Psoas muscle (tissue), 8 donors: ENCODE measurements at regions of chr9 and their contacts with region 1.

Region 1: DNA sequence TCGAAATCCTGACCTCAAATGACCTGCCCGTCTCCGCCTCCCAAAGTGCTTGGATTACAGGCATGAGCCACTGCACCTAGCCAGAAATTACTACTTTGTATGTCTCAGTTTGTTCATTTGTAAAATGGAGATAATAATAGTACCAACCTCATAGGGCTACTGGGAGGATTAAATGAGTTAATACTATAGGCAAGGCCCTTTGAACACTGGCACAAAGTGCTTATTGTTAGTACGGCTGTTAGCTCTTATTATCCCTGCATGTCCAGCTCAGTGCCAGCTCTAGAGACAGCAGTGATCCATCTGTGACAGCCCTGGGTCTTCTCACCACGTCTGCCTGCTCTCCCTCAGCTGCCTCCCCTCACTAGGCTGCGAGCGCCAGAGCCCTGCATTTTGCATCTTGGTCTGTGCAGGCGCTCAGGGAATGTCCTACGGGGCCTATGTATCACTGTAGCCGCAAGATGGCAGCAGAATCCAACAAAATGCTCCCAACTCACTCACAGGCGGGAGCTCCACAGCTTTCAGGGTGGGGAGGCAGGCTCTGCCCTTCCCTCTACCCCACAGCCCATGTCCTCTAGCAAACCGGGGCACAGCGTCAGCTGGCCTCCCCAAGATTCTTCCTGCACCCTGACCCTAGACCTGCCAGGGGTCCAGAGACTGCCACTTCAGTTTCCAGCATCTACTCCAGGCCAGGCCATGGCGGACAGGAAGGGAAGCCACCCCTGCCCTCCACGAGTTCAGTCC is 17.7 kb upstream of the AKNA start:
- DNase-seq: peak; percentile 70 to 80
- ATAC-seq: peak; percentile 91 to 99 (median 92)
- H3K4me3 ChIP-seq: no peak overlapping the region
- H3K27ac ChIP-seq: no peak overlapping the region
- H3K4me1 ChIP-seq: no peaks in the 10 kb centered on the region
- H3K27me3 ChIP-seq: no peaks in the 10 kb centered on the region
- CTCF ChIP-seq: peak; percentile 77

Region 2: GRCh38 chr9:114487607-114488300 is 82.3 kb after region 1 on chr9:
- intact Hi-C with region 1: no loop called
- DNase-seq: no peak
- ATAC-seq: peak; percentile 69 to 83 (median 80)
- H3K4me3 ChIP-seq: no peak overlapping the region
- H3K27ac ChIP-seq: no peak overlapping the region
- H3K4me1 ChIP-seq: no peaks in the 10 kb centered on the region
- H3K27me3 ChIP-seq: no peaks in the 10 kb centered on the region
- CTCF ChIP-seq: peak; percentile 62

Region 3: DNA sequence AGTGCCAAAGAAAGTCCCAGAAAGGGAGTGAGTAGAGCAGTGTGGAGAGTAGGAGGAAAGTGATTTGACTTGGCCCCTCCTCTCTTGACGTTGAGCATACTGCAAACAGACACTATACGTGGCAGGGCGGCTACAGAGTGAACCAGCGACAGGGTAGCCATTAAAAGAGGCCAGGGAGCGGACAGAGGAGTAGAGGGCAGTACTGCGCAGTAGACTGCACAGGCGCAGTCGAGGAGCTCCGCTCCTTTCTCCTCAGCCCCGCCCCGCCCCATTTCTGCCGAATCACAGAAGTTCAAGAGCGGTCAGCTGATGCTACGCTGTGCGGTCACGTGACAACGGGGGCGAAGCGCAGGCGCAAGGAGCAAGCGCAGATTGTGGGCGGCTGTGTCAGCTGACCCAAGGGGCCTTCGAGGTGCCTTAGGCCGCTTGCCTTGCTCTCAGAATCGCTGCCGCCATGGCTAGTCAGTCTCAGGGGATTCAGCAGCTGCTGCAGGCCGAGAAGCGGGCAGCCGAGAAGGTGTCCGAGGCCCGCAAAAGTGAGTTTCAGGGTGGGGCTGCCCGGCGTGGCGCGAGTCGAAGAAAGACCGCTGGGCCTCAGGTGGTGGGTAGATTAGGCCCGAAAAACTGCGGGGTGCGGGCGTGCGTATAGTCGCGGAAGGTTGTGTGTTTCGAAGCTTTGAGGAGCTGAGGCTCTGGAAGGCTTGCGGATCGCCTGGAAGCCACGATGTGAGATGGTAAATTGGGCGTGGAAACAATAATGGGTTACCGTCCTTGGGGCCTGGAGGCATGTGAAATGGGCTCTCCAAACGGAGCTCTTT is 182.1 kb after region 1 on chr9 and contains the start of gene ATP6V1G1:
- intact Hi-C with region 1: loop called in 1 of 2 experiments (anchors 10 kb)
- DNase-seq: peak; percentile 100
- ATAC-seq: peak; percentile 92 to 98 (median 96)
- H3K4me3 ChIP-seq: peak within 1 kb of the TSS; percentile 91
- H3K27ac ChIP-seq: peak within 1 kb of the TSS; percentile 90
- H3K4me1 ChIP-seq: peaks cover 35% of the 10 kb centered on the region
- H3K27me3 ChIP-seq: no peaks in the 10 kb centered on the region
- CTCF ChIP-seq: no peak
- total RNA-seq, gene ATP6V1G1: 60.9 to 98.8 (median 81.8) TPM

Region 4: DNA sequence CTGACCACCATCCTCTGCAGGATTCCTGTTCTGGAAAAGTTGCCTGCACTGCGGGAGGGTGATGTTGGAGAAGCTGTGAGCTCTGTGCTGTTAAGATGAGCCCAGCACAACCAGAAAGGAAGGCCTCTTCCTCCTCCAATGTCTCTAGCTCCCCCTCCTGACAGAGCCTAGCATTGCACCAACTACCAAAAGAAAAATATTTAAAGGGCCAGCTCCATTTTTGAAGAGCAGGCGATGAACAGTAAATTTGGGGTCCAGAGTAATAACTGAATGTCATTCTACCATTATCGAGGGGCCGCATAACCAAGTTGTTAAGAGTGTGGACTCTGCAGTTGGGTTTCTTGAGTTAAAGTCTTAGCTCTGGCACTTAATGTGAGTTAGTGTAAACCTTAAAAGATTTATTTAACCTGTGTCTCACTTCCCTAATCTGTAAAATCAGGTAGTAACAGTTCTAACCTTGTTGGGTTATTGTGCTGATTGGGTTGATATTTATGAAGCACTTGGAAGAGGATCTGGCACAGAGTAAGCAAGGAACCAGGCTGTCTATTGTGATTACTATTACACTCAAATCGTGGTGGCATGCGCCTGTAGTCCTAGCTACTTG is 248.2 kb after region 1 on chr9:
- intact Hi-C with region 1: loop called (anchors 2 to 5 kb)
- DNase-seq: peak in 1 of 2 donors; percentile 54
- ATAC-seq: peak; percentile 67 to 87 (median 80)
- H3K4me3 ChIP-seq: no peak overlapping the region
- H3K27ac ChIP-seq: no peak overlapping the region
- H3K4me1 ChIP-seq: no peaks in the 10 kb centered on the region
- H3K27me3 ChIP-seq: no peaks in the 10 kb centered on the region
- CTCF ChIP-seq: peak; percentile 82

Region 5: GRCh38 chr9:114906908-114907571 is 501.6 kb after region 1 on chr9:
- intact Hi-C with region 1: loop called (anchors 2 to 10 kb)
- DNase-seq: no peak
- ATAC-seq: no peak
- H3K4me3 ChIP-seq: no peak overlapping the region
- H3K27ac ChIP-seq: no peak overlapping the region
- H3K4me1 ChIP-seq: no peaks in the 10 kb centered on the region
- H3K27me3 ChIP-seq: peaks cover 0 to 3% (median 0%) of the 10 kb centered on the region in 3 donors
- CTCF ChIP-seq: peak; percentile 28

Region 6: GRCh38 chr9:114912936-114913616 is 507.6 kb after region 1 on chr9:
- intact Hi-C with region 1: loop called (anchors 2 to 10 kb)
- DNase-seq: no peak
- ATAC-seq: no peak
- H3K4me3 ChIP-seq: no peak overlapping the region
- H3K27ac ChIP-seq: no peak overlapping the region
- H3K4me1 ChIP-seq: no peaks in the 10 kb centered on the region
- H3K27me3 ChIP-seq: no peaks in the 10 kb centered on the region
- CTCF ChIP-seq: no peak